AG04450 (cell line): ENCODE measurements at regions of chr12 and their contacts with region 1.

Region 1: DNA sequence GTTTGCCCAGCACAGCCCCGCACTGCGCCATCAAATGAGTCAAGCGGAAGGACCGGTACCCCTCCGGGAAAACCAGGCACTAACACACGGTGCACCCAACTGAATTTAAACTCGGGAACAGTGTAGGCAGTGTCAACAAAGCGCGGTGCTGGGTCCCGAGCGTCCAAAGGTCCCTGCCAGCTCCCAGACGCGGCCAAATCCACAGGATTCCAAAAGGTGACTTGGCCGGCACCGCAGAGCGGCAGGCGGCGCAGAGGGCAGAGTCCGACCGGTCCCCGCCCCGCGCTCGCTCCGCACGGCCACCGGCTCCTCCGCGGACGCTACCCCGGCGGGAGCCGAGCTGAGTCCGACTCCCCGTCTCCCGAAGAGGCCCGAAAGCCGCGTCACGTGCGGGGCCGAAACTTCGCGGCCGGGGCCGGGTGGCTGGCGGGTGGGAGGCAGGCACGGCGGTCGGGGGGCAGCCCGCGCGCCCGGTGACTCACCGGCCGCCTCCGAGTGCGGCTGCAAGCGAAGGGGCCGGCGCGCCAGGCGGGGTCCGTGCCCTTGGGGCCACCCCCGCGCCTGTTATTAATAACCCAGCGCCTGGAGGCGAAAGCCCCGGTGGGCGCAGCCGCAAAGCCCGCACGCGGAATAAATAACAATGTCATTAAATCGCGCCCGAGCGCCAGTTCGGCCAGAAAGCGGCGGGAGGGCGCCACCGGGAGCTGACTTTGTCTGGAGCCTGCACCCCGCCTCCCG is 863 bp downstream of the DENND5B start:
- DNase-seq: no peak
- H3K4me3 ChIP-seq: peak overlapping the region; percentile 86
- H3K27ac ChIP-seq: peak overlapping the region; percentile 93
- H3K27me3 ChIP-seq: no peaks in the 10 kb centered on the region
- CTCF ChIP-seq: no peak

Region 2: DNA sequence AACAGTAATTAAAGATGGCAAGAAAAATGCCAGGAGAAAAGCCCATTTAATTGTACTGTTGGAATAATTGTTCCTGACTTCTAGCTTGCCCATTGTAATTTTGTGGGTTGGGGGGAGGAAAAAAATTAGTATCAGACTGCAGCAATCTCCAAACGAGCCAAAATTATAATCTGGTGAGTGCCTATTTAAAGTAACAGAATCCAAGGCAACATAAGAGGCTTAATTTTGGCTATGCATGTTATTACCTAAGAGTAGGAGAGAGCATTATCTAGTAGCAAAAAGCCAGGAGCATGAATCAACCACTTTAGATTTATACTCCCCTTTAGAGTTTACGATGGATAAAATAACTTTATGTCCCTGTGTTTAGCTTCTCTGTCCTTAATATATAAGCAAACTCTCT is 15.5 kb after region 1 on chr12:
- CTCF ChIA-PET with region 1: no interaction called
- POLR2A ChIA-PET with region 1: interaction called, 10 read pairs
- DNase-seq: no peak
- H3K4me3 ChIP-seq: no peak overlapping the region
- H3K27ac ChIP-seq: no peak overlapping the region
- H3K27me3 ChIP-seq: no peaks in the 10 kb centered on the region
- CTCF ChIP-seq: no peak